ENCODE measurements at regions of chr14 and their contacts with region 1.

Region 1: GRCh38 chr14:66624299-66624937 is 116.5 kb downstream of the GPHN start:
- DNase-seq: peak; percentile 61 to 78 (median 73)
- H3K4me3 ChIP-seq: no peak overlapping the region
- H3K27ac ChIP-seq: no peak overlapping the region
- H3K4me1 ChIP-seq: no peaks in the 10 kb centered on the region
- H3K27me3 ChIP-seq: no peaks in the 10 kb centered on the region

Region 2: GRCh38 chr14:66746316-66747006 is 122.0 kb after region 1 on chr14:
- CTCF ChIA-PET with region 1: interaction called, 21 read pairs
- POLR2A ChIA-PET with region 1: no interaction called
- DNase-seq: peak; percentile 70 to 80 (median 79)
- H3K4me3 ChIP-seq: no peak overlapping the region
- H3K27ac ChIP-seq: no peak overlapping the region
- H3K4me1 ChIP-seq: no peaks in the 10 kb centered on the region
- H3K27me3 ChIP-seq: no peaks in the 10 kb centered on the region